Astrocyte of the cerebellum (primary cell): ENCODE measurements at regions of chr6 and their contacts with region 1.

Region 1: DNA sequence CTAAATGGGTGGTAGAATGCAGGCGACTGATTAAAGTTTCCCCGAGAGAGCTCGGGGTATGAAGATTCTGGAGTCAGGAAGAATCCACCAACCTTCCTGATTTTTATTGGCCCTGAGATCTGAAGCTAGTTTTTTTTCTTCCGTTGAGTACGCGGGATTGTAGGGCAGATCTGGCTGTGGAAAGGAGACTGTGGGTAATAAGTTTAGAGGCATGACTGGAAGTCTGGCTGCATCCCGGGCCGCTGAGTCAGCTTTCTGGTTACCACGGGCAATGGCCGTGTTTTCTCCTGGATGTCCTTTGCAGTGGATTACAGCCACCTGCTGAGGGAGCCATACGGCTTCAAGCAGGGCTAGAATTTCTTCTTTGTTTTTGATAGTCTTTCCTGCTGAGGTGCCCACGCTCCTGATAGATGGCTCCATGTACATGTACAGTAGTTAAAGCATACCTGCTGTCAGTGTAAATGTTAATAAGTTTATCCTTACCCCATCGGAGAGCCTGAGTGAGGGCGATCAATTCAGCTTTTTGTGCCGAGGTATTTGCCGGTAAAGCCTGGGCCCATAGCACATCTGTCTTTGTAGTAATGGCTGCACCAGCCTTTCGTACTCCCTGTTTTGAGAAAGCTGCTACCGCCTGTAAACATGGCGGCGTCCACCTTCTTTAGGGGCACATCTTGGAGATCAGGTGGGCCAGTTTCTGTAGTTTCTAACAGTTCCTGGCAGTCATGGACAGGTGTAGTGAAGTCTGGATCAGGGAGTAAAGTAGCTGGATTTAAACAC is 154.0 kb downstream of the TRIM27 start:
- DNase-seq: no peak
- H3K4me3 ChIP-seq: no peak overlapping the region
- CTCF ChIP-seq: no peak

Region 2: DNA sequence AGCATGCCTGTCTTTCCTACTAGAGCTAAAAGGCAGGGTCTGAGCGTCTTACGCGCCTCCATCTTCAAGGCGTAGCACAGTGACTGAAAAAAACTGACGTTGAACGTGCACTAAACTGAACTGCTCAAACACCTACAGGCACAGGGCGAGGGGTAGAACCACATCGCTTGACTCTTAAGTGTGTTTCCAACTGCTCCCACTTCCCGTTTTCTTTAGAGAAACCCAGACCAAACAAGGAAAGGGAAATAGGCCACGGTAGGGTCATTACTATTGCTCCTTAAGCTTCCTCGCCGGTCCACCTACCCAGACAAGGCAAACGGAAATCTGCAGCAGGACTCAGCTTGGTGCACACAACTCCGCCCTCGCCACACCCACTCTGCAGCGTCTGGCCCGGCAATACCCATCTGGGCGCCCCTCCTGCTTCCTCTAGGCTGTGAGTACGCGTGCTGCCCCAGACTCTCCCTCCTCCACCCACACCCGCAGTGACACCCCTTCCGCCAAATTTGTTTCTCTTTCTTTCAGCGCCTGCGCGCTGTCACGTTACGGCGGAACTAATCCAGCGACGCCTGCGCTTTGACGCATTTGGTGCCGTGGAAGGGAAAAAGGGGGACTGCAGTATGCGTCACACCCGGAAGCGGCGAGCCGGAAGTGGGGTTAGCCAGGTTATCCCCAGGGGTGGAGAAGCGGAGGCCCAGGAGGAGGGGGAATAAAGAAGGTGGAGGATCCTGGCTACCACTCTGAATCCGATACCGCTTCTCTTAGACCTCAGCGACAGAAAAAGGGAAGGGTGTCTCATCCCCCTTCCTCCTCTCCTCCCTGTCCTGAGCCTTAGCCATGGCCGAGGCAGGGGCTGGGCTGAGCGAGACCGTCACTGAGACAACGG is 1297.0 kb after region 1 on chr6 and contains the start of gene PPP1R11:
- in situ Hi-C with region 1: loop called (anchors 25 kb)
- DNase-seq: peak; percentile 97
- H3K4me3 ChIP-seq: peak within 1 kb of the TSS; percentile 82
- CTCF ChIP-seq: no peak